Posterior vena cava (tissue), 2 donors: ENCODE measurements at regions of chr9 and their contacts with region 1.

Region 1: DNA sequence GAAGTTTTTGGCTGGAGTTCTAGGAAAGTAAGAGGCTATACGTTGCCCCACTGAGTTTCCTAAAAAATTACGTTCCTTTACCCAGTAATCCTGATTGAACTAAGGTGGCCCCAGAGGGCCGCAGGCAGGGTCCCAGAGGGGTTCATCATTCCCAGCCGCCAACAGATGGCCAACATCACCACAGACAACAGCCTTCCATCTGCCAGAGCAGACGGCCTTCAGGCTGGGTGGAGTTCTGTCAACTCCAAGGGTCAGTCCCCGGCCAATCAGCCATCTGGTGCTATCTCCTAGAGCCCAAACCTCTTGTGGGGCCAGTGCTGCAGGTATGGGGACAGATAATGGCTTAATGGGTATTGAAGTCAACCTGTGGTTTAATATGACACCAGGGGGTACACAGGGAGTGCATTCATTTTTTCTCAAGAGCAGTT is 30.4 kb downstream of the TBC1D2 start:
- DNase-seq: no peak

Region 2: GRCh38 chr9:98201102-98201501 is 23.9 kb before region 1 on chr9:
- intact Hi-C with region 1: loop called in 1 of 2 experiments (anchors 1 kb)
- DNase-seq: no peak

Region 3: DNA sequence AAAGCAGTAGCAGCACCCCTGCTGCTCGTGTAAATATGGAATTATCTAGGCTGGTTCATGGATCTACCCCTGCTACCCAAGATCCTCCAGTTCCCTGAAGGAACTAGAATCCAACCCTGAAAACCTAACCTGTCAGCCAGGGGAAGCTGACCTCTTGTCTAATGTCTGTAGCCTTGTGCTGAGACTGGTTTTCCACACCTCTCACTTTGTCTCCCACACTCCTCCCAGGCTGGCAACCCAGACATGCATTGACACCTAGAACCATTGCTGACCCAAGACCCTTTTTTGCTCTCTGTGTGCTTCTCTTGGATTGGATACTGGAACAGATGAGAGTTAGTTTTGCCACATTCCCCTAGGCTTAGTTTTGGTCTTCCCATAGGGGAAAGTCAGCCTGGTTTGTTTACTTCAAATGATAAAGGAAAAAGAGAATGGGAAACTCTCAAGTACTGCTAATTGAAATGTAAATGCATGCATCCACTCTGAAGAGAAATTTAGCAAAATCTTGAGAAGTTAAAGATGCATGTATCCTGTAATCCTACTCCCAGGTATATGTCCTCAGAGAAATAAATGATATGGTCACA is 1560.1 kb after region 1 on chr9:
- intact Hi-C with region 1: no loop called
- DNase-seq: no peak